Caco-2 (cell line): ENCODE measurements at regions of chrX and their contacts with region 1.

Region 1: GRCh38 chrX:74492720-74493201 is 71.5 kb downstream of the SLC16A2 start:
- DNase-seq: peak in 1 of 2 experiments; percentile 3
- H3K4me3 ChIP-seq: no peak overlapping the region
- H3K4me3 Mint-ChIP-seq: no peak overlapping the region
- H3K27ac Mint-ChIP-seq: no peak overlapping the region
- H3K4me1 ChIP-seq: no peaks in the 10 kb centered on the region
- H3K4me1 Mint-ChIP-seq: no peaks in the 10 kb centered on the region
- H3K27me3 ChIP-seq: no peaks in the 10 kb centered on the region
- H3K27me3 Mint-ChIP-seq: no peaks in the 10 kb centered on the region
- CTCF ChIP-seq: no peak

Region 2: DNA sequence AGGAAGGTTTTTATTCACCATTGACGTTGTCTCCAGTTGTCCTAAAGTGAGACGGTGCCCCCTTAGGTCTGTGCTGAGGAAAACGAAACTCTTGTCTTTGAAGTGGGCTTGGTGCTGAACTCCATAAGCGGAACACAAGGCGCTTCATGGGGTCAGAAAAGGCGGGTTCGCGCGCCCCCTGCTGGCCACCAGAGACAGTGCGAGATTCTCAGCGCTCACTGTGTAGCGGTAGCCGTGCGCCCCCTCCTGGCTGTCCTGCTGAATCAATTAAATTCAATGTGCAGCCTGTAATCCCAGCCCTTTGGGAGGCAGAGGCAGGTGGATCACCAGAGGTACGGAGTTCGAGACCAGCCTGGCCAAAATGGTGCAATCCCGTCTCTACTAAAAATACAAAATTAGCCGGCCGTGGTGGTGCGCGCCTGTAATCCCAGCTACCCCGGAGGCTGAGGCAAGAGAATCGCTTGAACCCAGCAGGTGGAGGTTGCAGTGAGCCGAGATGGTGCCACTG is 57.6 kb after region 1 on chrX:
- CTCF ChIA-PET with region 1: no interaction called
- POLR2A ChIA-PET with region 1: no interaction called
- intact Hi-C with region 1: loop called (anchors 1 kb)
- DNase-seq: peak; percentile 63 to 80
- H3K4me3 ChIP-seq: no peak overlapping the region
- H3K4me3 Mint-ChIP-seq: no peak overlapping the region
- H3K27ac Mint-ChIP-seq: no peak overlapping the region
- H3K4me1 ChIP-seq: no peaks in the 10 kb centered on the region
- H3K4me1 Mint-ChIP-seq: no peaks in the 10 kb centered on the region
- H3K27me3 ChIP-seq: no peaks in the 10 kb centered on the region
- H3K27me3 Mint-ChIP-seq: no peaks in the 10 kb centered on the region
- CTCF ChIP-seq: peak; percentile 92 to 94